CD14-positive monocyte (primary cell): ENCODE measurements at regions of chr12 and their contacts with region 1.

Region 1: GRCh38 chr12:64801381-64801780 is 23.1 kb upstream of the TBC1D30 start:
- DNase-seq: no peak
- H3K4me3 ChIP-seq: no peak overlapping the region
- H3K4me3 Mint-ChIP-seq: no peak overlapping the region
- H3K27ac ChIP-seq: no peak overlapping the region
- H3K27ac Mint-ChIP-seq: peak overlapping the region in 4 of 7 donors; percentile 8 to 61 (median 52)
- H3K4me1 ChIP-seq: peaks cover 20 to 21% of the 10 kb centered on the region in 2 donors
- H3K4me1 Mint-ChIP-seq: peaks cover 21% of the 10 kb centered on the region
- H3K27me3 ChIP-seq: no peaks in the 10 kb centered on the region
- H3K27me3 Mint-ChIP-seq: peaks cover 6 to 13% (median 10%) of the 10 kb centered on the region in 3 donors
- CTCF ChIP-seq: no peak

Region 2: DNA sequence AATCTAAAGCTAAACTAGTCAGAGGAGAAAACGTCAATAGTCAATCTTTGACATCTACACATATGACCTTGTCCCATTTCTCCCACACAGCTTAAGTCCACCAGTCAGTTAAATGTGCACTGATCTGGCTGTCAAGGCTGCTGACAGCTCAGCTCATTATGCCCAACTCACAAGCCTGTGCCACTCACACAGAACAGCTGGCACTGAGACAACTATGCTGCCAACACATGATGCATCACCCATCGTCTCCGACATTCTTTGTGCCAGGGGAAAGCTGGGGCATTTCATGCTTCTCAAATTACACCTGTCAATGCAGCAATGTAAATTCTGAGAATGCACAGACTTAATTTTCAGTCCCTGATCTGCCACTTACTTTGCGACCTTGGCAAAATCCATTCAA is 67.5 kb before region 1 on chr12:
- intact Hi-C with region 1: no loop called
- DNase-seq: no peak
- H3K4me3 ChIP-seq: no peak overlapping the region
- H3K4me3 Mint-ChIP-seq: no peak overlapping the region
- H3K27ac ChIP-seq: peak overlapping the region in 1 of 2 donors; percentile 9
- H3K27ac Mint-ChIP-seq: peak overlapping the region in 2 of 7 donors; percentile 12 to 39
- H3K4me1 ChIP-seq: peaks cover 21 to 22% of the 10 kb centered on the region in 2 donors
- H3K4me1 Mint-ChIP-seq: peaks cover 33% of the 10 kb centered on the region
- H3K27me3 ChIP-seq: no peaks in the 10 kb centered on the region
- H3K27me3 Mint-ChIP-seq: peaks cover 0 to 2% (median 0%) of the 10 kb centered on the region in 3 donors
- CTCF ChIP-seq: no peak

Region 3: DNA sequence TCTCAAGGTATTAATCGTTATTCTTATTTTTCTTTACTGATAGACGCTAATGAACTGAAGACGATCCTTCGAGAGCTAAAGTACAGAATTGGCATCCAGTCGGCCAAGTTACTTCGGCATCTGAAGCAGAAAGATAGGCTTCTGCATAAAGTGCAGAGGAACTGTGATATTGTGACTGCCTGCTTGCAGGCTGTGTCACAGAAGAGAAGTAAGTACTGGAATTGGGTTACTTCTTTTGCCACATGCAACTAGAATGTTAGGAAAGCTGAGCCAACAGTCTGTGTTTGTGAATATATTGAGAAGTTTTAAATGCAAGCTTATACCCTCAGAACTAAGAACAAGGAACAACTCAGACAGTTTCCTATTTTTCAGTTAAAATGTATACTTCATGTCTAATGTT is 15.5 kb before region 1 on chr12:
- intact Hi-C with region 1: loop called in 1 of 2 experiments (anchors 2 kb)
- DNase-seq: no peak
- H3K4me3 ChIP-seq: no peak overlapping the region
- H3K4me3 Mint-ChIP-seq: no peak overlapping the region
- H3K27ac ChIP-seq: no peak overlapping the region
- H3K27ac Mint-ChIP-seq: no peak overlapping the region
- H3K4me1 ChIP-seq: peaks cover 20 to 23% of the 10 kb centered on the region in 2 donors
- H3K4me1 Mint-ChIP-seq: peaks cover 20% of the 10 kb centered on the region
- H3K27me3 ChIP-seq: peaks cover 16 to 19% of the 10 kb centered on the region in 2 donors
- H3K27me3 Mint-ChIP-seq: peaks cover 17 to 24% (median 19%) of the 10 kb centered on the region in 3 donors
- CTCF ChIP-seq: no peak

Region 4: DNA sequence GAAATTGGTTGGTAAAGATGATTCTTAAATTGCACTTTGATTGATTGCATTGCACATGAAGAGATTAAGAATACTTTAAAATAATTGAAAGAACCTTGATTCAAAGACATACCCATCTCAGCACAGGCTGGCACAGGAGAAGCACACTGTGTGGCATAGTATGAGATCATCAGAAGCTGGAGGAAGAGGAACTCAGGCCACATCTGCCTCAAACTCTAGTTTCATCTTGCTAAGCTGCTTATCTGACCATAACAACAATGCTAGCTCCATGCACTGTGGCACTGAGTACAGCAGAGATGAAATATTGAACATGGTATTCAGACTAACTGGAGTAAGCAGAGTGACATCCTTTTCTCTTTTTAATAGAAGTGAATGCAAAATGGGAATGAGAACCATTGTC is 122.2 kb after region 1 on chr12:
- intact Hi-C with region 1: no loop called
- DNase-seq: no peak
- H3K4me3 ChIP-seq: no peak overlapping the region
- H3K4me3 Mint-ChIP-seq: no peak overlapping the region
- H3K27ac ChIP-seq: no peak overlapping the region
- H3K27ac Mint-ChIP-seq: no peak overlapping the region
- H3K4me1 ChIP-seq: no peaks in the 10 kb centered on the region
- H3K4me1 Mint-ChIP-seq: no peaks in the 10 kb centered on the region
- H3K27me3 ChIP-seq: peaks cover 5 to 8% of the 10 kb centered on the region in 2 donors
- H3K27me3 Mint-ChIP-seq: peaks cover 10 to 30% (median 19%) of the 10 kb centered on the region in 3 donors
- CTCF ChIP-seq: no peak